ENCODE measurements at regions of chr2 and their contacts with region 1.

Region 1: DNA sequence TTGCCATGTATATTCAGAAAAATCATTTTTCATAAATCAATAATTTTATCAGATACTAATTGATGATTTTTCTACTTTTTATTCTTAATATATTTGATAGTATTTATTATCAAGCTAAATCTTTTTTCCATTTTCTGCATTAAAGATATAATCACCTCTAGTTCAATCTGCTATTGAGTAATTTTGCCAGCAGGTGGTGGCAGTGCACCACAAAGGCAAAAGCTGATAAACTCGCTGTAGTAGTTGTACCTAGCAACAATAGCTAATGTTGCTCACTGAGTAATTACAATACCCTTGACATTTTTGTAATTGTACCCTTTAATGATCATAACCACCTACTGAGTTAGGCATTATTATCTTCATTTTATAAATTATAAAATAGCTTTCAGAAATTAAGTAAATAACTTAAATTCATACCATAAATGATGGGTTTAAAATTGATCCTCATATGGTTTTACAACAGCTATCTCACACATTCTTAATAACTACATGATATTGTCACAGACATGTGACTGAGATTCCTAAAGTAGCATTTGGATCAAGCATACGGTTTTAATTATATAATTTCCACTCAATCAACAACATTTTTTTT is 52.0 kb upstream of the CALCRL start:
- DNase-seq: peak; percentile 60 to 87
- H3K4me3 ChIP-seq: no peak overlapping the region
- CTCF ChIP-seq: peak in 1 of 3 donors; percentile 60
- POLR2A ChIP-seq: no peak

Region 2: GRCh38 chr2:187581125-187581896 is 81.3 kb after region 1 on chr2:
- intact Hi-C with region 1: loop called (anchors 2 kb)
- DNase-seq: no peak
- H3K4me3 ChIP-seq: no peak overlapping the region
- CTCF ChIP-seq: peak in 1 of 3 donors; percentile 59
- POLR2A ChIP-seq: no peak